Calu3 (cell line): ENCODE measurements at regions of chr11 and their contacts with region 1.

Region 1: GRCh38 chr11:112599856-112600533 is 339.3 kb upstream of the PLET1 start:
- DNase-seq: no peak
- H3K4me3 Mint-ChIP-seq: no peak overlapping the region
- H3K27ac Mint-ChIP-seq: no peak overlapping the region
- H3K4me1 Mint-ChIP-seq: peaks cover under 1% of the 10 kb centered on the region
- H3K27me3 Mint-ChIP-seq: no peaks in the 10 kb centered on the region
- CTCF ChIP-seq: no peak

Region 2: GRCh38 chr11:112784323-112785073 is 184.5 kb after region 1 on chr11:
- CTCF ChIA-PET with region 1: no interaction called
- intact Hi-C with region 1: loop called (anchors 5 kb)
- DNase-seq: peak; percentile 56
- H3K4me3 Mint-ChIP-seq: peak overlapping the region; percentile 52
- H3K27ac Mint-ChIP-seq: no peak overlapping the region
- H3K4me1 Mint-ChIP-seq: peaks cover 28% of the 10 kb centered on the region
- H3K27me3 Mint-ChIP-seq: no peaks in the 10 kb centered on the region
- CTCF ChIP-seq: no peak

Region 3: GRCh38 chr11:113532697-113533424 is 932.9 kb after region 1 on chr11:
- CTCF ChIA-PET with region 1: no interaction called
- intact Hi-C with region 1: no loop called
- DNase-seq: peak; percentile 73
- H3K4me3 Mint-ChIP-seq: no peak overlapping the region
- H3K27ac Mint-ChIP-seq: no peak overlapping the region
- H3K4me1 Mint-ChIP-seq: no peaks in the 10 kb centered on the region
- H3K27me3 Mint-ChIP-seq: no peaks in the 10 kb centered on the region
- CTCF ChIP-seq: peak; percentile 40